Motor neuron (in vitro differentiated cells): ENCODE measurements at regions of chr11 and their contacts with region 1.

Region 1: GRCh38 chr11:33172996-33173395 is 11.7 kb upstream of the CSTF3 start:
- ATAC-seq: peak in 1 of 8 experiments; percentile 59
- H3K4me3 ChIP-seq: no peak overlapping the region
- H3K27ac ChIP-seq: no peak overlapping the region
- H3K4me1 ChIP-seq: no peaks in the 10 kb centered on the region

Region 2: DNA sequence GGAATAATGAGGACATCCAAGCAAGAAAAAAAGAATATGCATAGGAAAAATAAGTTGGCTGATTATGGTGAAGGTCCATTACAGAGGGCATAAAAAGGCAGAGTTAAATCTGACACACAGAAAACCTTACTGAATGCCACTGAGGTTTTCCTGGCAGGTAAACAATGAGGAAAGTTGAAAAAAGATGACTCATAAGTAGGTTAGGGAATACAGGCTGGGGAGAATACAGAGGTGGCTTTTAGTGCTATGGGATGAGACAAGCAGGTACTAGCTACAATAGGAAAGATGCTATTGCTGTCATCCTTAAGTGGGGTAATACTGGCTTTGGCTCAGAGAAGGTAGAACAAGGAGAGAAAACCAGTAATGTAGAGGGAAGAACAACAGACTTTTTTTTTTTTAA is 56.5 kb before region 1 on chr11:
- in situ Hi-C with region 1: no loop called
- ATAC-seq: no peak
- H3K4me3 ChIP-seq: no peak overlapping the region
- H3K27ac ChIP-seq: no peak overlapping the region
- H3K4me1 ChIP-seq: no peaks in the 10 kb centered on the region

Region 3: DNA sequence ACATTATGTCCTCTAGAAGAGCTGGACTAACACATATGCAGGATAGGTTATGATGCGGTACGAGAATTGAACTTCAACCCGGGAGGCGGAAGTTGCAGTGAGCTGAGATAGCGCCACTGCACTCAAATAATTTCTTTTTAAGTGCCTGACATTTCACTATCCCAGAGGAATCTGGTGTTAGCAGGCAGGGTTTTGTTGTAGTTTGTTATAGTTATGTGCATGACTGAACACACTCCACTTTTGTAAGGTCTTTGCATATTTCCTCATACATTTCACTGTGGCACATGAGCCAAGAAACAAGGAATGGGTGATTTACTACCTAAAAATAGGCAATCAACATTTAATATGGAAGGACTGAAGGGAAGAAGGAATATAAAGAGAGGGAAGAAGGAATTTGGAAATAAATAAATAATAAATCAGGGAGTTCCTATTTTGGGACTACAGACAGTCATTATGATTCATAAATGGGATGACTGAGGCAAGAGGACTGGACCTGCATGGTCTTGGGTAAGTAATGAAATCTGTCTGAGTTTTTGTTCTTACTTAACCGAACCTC is 75.5 kb after region 1 on chr11:
- in situ Hi-C with region 1: loop called in 1 of 9 experiments (anchors 10 kb)
- ATAC-seq: peak in 6 of 8 experiments; percentile 52 to 96 (median 77)
- H3K4me3 ChIP-seq: no peak overlapping the region
- H3K27ac ChIP-seq: no peak overlapping the region
- H3K4me1 ChIP-seq: peaks cover 0 to 3% of the 10 kb centered on the region in 2 donors

Region 4: GRCh38 chr11:33706546-33706945 is 533.5 kb after region 1 on chr11:
- in situ Hi-C with region 1: no loop called
- ATAC-seq: no peak
- H3K4me3 ChIP-seq: no peak overlapping the region
- H3K27ac ChIP-seq: no peak overlapping the region
- H3K4me1 ChIP-seq: peaks cover 7 to 10% of the 10 kb centered on the region in 2 donors